ENCODE measurements at regions of chr10 and their contacts with region 1.

Region 1: GRCh38 chr10:110815354-110816004 is 56.2 kb upstream of the PDCD4 start:
- DNase-seq: peak; percentile 56
- H3K4me3 Mint-ChIP-seq: no peak overlapping the region
- H3K27ac Mint-ChIP-seq: peak overlapping the region; percentile 15
- H3K4me1 Mint-ChIP-seq: peaks cover 30% of the 10 kb centered on the region
- H3K27me3 Mint-ChIP-seq: no peaks in the 10 kb centered on the region

Region 2: DNA sequence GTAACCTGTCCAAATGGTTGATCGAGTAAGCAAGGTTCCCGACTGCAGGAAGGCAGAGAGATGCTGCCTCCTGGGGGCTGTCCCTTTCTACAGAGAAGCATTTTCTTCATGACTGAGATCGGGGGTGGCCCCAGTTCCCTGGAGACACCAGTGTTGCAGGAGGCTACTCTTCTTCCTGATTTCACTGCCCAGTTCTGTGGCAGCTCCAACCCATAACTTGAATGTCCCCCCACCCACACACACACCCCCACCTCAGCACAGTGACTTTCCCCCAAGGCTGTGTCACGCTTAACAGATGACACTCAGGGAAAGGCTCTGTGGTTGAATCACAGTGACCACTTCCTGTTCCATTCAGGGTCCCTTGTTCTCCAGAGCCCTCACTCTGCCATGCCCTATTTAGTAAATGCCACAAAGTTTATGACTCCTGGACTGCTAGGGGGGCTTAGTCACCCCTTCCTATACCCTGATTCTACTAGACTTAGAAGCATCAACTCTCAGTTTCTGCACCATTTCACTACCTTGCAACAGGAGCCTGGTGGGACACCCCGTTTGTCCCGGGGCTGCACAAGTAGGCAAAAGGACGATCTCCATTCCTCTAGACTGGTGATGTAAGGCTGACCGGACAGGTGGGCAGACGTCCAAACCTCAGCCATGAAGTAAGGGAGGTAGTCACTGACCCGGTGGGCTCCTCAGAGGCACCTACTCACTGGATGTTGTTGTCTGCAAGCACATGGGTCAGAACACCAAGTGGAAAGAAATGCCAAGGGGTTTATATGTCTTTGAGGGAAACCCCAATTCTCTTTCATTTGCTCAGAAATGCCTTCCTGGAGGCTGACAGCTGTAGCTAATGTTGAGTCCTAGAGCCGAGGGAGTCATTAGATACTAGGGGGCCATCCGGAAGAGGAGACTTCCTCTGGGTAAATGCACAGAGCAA is 279.3 kb before region 1 on chr10:
- CTCF ChIA-PET with region 1: no interaction called
- intact Hi-C with region 1: no loop called
- DNase-seq: peak; percentile 90
- H3K4me3 Mint-ChIP-seq: no peak overlapping the region
- H3K27ac Mint-ChIP-seq: peak overlapping the region; percentile 54
- H3K4me1 Mint-ChIP-seq: peaks cover 22% of the 10 kb centered on the region
- H3K27me3 Mint-ChIP-seq: no peaks in the 10 kb centered on the region

Region 3: GRCh38 chr10:110834629-110835301 is 19.3 kb after region 1 on chr10:
- CTCF ChIA-PET with region 1: interaction called, 3 read pairs
- intact Hi-C with region 1: loop called (anchors 1 kb)
- DNase-seq: peak; percentile 58
- H3K4me3 Mint-ChIP-seq: no peak overlapping the region
- H3K27ac Mint-ChIP-seq: peak overlapping the region; percentile 47
- H3K4me1 Mint-ChIP-seq: peaks cover 39% of the 10 kb centered on the region
- H3K27me3 Mint-ChIP-seq: no peaks in the 10 kb centered on the region

Region 4: GRCh38 chr10:110843031-110843430 is 27.6 kb after region 1 on chr10:
- CTCF ChIA-PET with region 1: interaction called, 3 read pairs
- intact Hi-C with region 1: loop called (anchors 2 kb)
- DNase-seq: peak; percentile 77
- H3K4me3 Mint-ChIP-seq: no peak overlapping the region
- H3K27ac Mint-ChIP-seq: peak overlapping the region; percentile 65
- H3K4me1 Mint-ChIP-seq: peaks cover 43% of the 10 kb centered on the region
- H3K27me3 Mint-ChIP-seq: no peaks in the 10 kb centered on the region

Measured in activated naive CD4-positive, alpha-beta T cell treated with anti-CD3 and anti-CD28 coated beads for 36 hours (primary cell).